ENCODE measurements at regions of chr20 and their contacts with region 1.

Region 1: DNA sequence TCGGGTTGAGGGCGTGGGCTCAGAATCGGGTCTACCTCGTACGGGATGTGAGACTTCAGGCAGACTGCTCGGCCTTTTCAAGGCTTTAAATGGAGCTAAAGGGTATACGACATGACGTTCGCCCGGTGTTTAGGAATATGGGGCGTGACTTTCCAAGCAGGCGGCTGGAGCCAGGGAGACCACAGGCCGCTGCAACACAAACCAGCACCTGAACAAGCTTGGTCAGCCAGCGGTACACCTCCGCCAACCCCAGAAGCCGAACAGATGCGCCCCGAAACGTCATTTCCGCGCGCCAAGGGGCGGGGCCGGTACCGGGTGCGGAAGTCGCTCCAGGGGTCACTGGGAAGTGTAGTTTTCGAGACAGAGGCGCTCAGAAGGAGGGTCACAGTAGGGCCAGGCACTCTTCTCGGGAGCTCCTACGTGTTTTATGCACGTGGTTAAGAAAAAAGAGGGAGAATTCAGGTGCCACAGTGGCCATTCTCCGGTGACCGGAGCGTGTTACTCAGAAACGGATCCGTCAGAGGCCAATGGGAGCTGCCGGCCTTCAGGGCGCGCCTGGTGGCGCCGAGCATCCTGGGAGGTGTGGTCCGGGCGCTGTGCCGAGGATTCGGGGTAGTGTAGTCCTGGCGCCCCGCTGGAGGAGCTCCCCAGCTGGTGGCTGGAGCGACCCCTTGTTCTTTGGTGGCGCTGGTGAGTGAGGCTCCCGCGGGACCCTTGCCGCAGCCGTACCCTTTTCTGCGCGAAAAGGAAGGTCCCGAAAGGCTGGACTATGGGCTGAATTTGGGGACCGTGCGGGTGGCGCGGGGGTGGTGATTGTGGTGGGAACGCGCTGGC is at the start of gene ZNF133:
- DNase-seq: peak; percentile 97
- ATAC-seq: peak; percentile 98
- H3K4me3 Mint-ChIP-seq: peak within 1 kb of the TSS; percentile 98
- H3K27ac Mint-ChIP-seq: peak within 1 kb of the TSS; percentile 99
- H3K4me1 Mint-ChIP-seq: peaks cover 19% of the 10 kb centered on the region
- H3K27me3 Mint-ChIP-seq: peaks cover 14% of the 10 kb centered on the region
- total RNA-seq, gene ZNF133: 8.8 to 10.1 TPM

Region 2: GRCh38 chr20:16729565-16730456 is 1558.3 kb before region 1 on chr20 and contains the start of gene SNRPB2:
- CTCF ChIA-PET with region 1: no interaction called
- POLR2A ChIA-PET with region 1: no interaction called
- intact Hi-C with region 1: loop called in 1 of 2 experiments (anchors 5 kb)
- DNase-seq: peak; percentile 95
- ATAC-seq: peak; percentile 95
- H3K4me3 Mint-ChIP-seq: peak within 1 kb of the TSS; percentile 95
- H3K27ac Mint-ChIP-seq: peak within 1 kb of the TSS; percentile 98
- H3K4me1 Mint-ChIP-seq: peaks cover 46% of the 10 kb centered on the region
- H3K27me3 Mint-ChIP-seq: peaks cover 9% of the 10 kb centered on the region
- total RNA-seq, gene SNRPB2: 122 to 129 TPM

Region 3: DNA sequence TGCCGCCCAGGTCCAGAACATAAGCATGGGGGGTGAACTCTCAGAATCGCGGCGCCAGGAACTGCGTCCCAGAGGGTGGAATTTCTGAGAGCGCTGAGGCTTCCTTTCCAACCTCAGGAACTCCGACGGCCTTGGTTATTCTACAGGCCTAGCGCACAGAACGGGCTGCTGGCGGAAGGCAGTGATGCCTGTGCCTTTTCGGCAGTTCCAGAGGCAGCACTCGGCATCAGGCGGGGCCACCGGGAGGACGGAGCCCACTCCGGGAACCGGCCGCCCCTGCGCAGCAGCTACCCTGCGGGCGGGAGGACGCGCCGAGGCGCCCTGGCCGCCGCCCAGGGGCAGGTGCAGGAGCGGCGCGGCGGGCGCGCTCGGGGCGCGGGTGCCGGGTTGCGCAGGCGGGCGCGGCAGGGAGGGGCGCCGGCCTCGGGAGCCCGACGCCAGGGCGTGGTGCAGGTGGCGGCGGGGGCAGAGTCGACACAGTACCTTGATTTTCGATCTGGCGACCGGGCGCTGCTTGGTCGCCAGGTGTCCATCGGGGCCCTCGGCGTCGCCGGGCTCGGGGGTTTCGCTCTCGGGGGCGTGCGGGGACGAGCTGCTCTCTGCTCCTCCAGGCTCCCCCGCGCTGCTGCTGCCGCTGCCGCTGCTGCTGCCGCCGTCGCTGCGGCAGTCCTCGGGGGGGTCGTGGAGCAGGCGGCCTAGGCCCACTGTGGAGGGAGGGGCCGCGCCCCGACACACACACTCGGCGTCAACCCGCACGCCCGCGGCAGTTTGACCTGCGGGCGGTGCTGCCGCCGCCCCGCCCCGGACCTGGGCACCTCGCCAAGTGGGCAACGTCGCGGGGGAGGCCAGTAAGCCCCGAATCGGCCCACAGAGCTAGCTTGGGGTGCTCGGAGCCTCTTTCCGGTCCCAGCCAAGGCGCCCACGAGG is 231.7 kb before region 1 on chr20:
- CTCF ChIA-PET with region 1: no interaction called
- POLR2A ChIA-PET with region 1: no interaction called
- intact Hi-C with region 1: loop called in 1 of 2 experiments (anchors 10 kb)
- DNase-seq: peak; percentile 28
- ATAC-seq: peak; percentile 80
- H3K4me3 Mint-ChIP-seq: peak overlapping the region; percentile 44
- H3K27ac Mint-ChIP-seq: no peak overlapping the region
- H3K4me1 Mint-ChIP-seq: peaks cover 8% of the 10 kb centered on the region
- H3K27me3 Mint-ChIP-seq: peaks cover 54% of the 10 kb centered on the region

Region 4: GRCh38 chr20:18258126-18258860 is 29.8 kb before region 1 on chr20:
- CTCF ChIA-PET with region 1: no interaction called
- POLR2A ChIA-PET with region 1: no interaction called
- intact Hi-C with region 1: no loop called
- DNase-seq: no peak
- ATAC-seq: no peak
- H3K4me3 Mint-ChIP-seq: no peak overlapping the region
- H3K27ac Mint-ChIP-seq: no peak overlapping the region
- H3K4me1 Mint-ChIP-seq: no peaks in the 10 kb centered on the region
- H3K27me3 Mint-ChIP-seq: peaks cover 2% of the 10 kb centered on the region

Region 5: DNA sequence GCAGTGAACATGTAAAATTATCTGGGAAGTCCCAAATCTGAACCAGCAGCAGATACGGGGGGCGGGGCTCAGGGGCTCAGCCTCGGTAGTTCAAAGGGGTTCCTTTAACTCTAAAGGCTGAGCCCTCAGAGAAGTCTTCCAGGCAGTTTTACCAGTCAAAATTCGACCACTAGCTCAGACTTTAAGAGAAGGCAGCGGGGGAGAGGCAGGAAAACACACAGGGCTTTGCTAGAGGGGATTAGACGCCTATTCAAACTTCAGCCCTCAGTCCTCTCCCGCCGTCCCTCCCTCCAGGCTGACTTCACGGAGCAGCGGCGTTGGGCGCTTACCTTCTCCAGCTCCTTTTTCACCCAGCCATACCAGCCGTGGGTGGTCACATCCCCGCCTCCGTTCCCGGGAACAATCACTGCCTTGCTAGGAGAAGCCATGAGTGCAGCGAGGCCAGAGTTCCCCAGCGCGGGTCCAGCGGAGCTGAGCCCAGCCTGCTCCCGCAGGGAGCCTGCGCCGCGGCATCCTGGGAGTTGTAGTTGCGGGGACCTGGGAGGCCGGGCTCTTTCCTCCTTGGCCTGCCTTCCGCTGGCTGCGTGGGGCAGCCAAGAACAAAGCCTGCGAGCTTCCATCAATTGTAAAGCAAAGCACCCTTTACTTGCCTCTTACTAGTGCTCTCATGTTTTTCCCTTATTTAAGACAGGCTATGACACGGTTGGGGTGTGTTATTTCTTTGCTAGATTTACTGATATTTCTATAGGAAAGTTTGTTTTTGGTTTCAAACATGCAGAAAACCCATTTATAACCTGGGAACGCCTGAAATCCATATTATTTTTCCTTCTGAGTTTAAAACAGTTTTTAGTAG is 208.8 kb after region 1 on chr20 and contains the start of gene RBBP9:
- CTCF ChIA-PET with region 1: no interaction called
- POLR2A ChIA-PET with region 1: no interaction called
- intact Hi-C with region 1: loop called in 1 of 2 experiments (anchors 2 kb)
- DNase-seq: peak; percentile 88
- ATAC-seq: peak; percentile 99
- H3K4me3 Mint-ChIP-seq: peak within 1 kb of the TSS; percentile 97
- H3K27ac Mint-ChIP-seq: peak within 1 kb of the TSS; percentile 83
- H3K4me1 Mint-ChIP-seq: peaks cover 12% of the 10 kb centered on the region
- H3K27me3 Mint-ChIP-seq: no peaks in the 10 kb centered on the region
- total RNA-seq, gene RBBP9: 19.9 to 20.6 TPM

Region 6: GRCh38 chr20:18587665-18588573 is 299.8 kb after region 1 on chr20 and contains the start of gene DTD1:
- CTCF ChIA-PET with region 1: no interaction called
- POLR2A ChIA-PET with region 1: interaction called, 3 read pairs
- intact Hi-C with region 1: loop called in 1 of 2 experiments (anchors 1 kb)
- DNase-seq: peak; percentile 96
- ATAC-seq: peak; percentile 92
- H3K4me3 Mint-ChIP-seq: peak within 1 kb of the TSS; percentile 89
- H3K27ac Mint-ChIP-seq: peak within 1 kb of the TSS; percentile 82
- H3K4me1 Mint-ChIP-seq: peaks cover 25% of the 10 kb centered on the region
- H3K27me3 Mint-ChIP-seq: peaks cover 6% of the 10 kb centered on the region
- total RNA-seq, gene DTD1: 40.7 to 54.6 TPM

Region 7: DNA sequence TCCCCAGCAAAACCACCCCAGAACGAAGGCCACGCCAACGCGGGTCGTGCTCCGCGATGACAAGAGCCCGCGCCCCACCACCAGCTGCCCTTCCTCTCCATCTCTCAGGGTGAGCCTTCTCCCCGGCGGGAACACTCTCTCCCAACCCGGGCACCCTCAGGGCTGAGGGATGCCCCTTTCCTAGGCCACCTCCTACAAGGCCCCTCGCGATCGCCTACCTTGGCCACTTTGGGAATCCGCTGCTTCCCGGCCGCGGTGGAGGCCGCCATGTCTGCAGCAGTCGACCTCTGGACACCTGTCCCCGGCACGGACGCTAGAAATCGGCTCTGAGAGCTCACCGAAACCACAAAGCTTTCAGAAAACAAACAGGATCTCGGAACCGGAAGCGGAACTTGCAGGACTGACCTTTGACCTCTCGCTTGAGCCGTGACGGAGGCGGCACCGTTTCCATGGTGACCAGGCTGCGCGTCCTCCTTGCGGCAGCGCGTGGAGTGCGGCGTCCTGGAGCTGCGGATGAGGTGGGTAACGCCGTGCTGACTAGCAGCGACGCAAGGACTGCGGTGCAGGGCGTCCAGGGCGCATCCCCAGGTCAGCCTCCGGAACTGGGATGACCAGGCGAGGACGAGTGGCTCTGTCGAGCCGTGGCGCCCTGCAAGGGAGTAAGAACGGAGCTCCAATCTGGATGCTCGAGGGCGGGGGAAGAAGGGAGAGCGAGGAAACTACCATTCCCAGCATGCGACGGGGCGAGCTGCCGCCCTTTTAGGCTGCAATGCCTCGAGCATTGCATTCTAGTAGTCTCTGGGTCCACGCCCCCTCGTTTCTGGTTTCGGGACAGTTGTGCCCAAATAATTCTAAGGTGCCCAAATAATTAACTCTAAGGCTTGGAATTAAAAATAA is 1764.2 kb after region 1 on chr20 and contains the starts of genes CFAP61 and CRNKL1:
- CTCF ChIA-PET with region 1: no interaction called
- POLR2A ChIA-PET with region 1: no interaction called
- intact Hi-C with region 1: loop called in 1 of 2 experiments (anchors 1 kb)
- DNase-seq: peak; percentile 98
- ATAC-seq: peak; percentile 95
- H3K4me3 Mint-ChIP-seq: peak within 1 kb of the TSS; percentile 99
- H3K27ac Mint-ChIP-seq: peak within 1 kb of the TSS; percentile 98
- H3K4me1 Mint-ChIP-seq: peaks cover 14% of the 10 kb centered on the region
- H3K27me3 Mint-ChIP-seq: no peaks in the 10 kb centered on the region
- total RNA-seq, gene CFAP61: 0.39 to 0.51 TPM
- total RNA-seq, gene CRNKL1: 19.9 to 22.2 TPM